Activated CD8-positive, alpha-beta memory T cell treated with anti-CD3 and anti-CD28 coated beads, Interleukin-2, amount 10 ng/mL, durations not matched to agents 7 days and 5 days (primary cell): ENCODE measurements at regions of chr20 and their contacts with region 1.

Region 1: DNA sequence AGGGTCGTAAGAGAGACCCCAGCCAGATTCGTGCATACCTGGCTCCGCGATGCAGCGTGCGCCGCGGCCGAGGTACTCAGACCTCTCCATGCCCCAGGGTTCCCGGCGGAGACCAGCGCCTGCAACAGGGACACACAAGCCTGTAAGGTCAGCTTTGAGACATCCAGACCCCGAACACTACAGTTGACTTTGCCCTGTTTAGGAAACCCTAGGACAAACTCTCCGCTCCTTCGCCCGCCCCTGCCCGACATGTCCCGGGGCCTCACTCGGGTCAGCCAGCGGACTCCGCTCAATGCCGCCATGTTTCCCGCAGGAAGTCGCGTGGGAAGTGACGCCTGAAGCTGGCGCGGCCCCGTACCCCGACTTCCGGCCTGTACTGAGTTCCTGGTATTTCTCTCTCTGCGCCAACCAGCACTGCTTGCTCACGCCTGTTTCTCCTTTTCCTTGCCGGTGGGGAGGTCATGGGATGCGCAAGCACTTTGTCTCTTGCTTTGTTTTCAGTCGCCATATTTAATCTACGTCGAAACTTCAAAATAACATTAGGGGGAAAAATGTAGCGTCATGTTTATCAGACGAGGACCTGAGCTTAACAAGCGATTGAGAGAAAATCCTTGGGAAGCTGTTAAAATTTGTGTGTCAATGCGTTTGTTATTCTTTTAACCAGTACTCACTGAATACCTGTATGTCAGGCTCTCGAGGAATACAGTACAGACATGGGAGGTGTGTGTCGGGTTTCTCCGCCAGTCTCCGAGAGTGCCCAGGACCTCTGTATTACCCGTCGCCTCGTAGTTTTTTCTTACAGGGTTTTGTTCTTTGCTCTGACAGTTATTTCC is at the start of gene IDH3B:
- DNase-seq: peak; percentile 96
- ATAC-seq: peak; percentile 97
- H3K4me3 Mint-ChIP-seq: peak within 1 kb of the TSS; percentile 79
- H3K27ac Mint-ChIP-seq: peak within 1 kb of the TSS; percentile 96
- H3K4me1 Mint-ChIP-seq: peaks cover 26% of the 10 kb centered on the region
- H3K27me3 Mint-ChIP-seq: peaks cover 7% of the 10 kb centered on the region
- total RNA-seq, gene IDH3B: 91.4 to 96.0 TPM

Region 2: DNA sequence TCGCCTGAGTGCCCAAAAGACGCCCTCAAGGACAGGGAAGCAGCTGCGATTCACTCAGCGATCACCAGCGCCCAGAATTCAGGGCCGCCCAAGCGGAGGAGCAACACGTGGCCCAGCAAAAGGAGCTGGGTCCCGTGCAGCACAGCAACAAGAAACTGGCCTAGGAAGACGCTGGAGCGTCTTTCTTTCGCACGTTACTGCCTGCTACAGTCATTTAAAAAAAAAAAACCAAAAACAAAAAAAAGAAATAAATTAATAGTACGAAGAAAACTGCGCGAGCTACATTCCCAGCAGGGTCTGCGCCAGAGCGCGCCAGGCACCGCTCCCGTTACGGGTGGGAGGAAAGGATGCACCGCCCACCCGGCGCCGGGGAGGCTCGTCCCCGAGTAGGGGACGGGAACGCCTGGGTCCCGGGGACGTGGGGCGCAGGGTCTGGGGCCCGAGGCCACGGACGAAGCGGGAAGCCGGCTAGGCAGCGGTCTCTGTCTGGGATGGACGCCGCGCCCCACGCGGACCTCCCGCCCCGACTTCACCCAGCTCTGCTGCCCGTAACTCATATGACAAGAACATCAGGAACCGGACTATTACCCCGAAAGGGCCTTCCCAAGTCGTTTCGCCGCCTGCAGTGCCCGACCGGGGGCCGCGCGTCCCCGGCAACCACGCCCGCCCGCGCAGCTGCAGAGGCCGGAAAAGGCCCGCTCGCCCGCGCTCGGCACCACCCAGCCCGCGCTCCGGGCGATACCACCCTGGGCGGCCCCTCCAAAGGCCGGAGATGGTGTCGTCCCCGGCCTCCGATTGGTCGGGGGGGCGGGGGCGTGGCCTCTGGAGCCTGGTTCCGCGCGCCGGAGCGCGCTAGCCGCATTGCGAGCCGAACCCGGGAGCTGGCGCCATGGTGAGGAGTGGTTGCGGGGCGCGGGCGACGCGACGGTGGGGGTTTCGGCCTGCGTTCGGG is 12.1 kb before region 1 on chr20 and contains the start of gene NOP56:
- CTCF ChIA-PET with region 1: interaction called, 21 read pairs
- DNase-seq: peak; percentile 94
- ATAC-seq: peak; percentile 92
- H3K4me3 Mint-ChIP-seq: peak within 1 kb of the TSS; percentile 91
- H3K27ac Mint-ChIP-seq: peak within 1 kb of the TSS; percentile 87
- H3K4me1 Mint-ChIP-seq: peaks cover 50% of the 10 kb centered on the region
- H3K27me3 Mint-ChIP-seq: no peaks in the 10 kb centered on the region
- total RNA-seq, gene NOP56: 469 to 508 TPM